Left colon (tissue), 2 donors: ENCODE measurements at regions of chr5 and their contacts with region 1.

Region 1: DNA sequence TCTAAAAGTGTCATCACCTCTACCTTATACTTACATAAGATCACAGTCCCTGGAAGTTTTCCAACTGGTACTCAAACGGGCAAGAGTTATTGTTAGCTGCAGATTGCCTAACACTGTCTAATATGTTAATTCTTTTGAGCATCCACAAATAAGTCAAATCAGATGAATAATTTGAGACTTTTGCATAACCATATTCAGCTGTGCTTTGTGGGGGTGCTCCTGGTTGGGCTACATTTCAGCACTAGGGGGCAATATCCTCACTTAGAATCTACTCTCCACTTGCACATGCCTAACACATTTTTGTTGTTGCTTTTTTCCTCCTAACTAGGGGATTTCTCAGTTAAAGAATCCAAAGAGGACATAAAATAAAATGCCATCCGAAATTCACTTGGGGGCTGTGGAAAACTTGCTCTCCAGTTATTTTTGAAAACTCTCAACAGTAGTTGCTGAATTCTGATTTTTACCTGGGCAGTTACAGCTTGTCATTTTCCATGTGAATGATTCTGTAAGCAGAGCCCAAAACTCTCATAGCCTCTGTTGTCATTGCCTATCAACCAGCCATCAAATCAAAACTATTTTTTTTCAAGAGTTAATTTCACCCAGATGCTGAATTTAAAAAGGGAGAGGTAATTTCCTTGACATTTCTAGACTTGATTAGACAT is 71.5 kb downstream of the TRIM36 start:
- DNase-seq: peak in 1 of 2 donors; percentile 16
- ATAC-seq: peak; percentile 88

Region 2: DNA sequence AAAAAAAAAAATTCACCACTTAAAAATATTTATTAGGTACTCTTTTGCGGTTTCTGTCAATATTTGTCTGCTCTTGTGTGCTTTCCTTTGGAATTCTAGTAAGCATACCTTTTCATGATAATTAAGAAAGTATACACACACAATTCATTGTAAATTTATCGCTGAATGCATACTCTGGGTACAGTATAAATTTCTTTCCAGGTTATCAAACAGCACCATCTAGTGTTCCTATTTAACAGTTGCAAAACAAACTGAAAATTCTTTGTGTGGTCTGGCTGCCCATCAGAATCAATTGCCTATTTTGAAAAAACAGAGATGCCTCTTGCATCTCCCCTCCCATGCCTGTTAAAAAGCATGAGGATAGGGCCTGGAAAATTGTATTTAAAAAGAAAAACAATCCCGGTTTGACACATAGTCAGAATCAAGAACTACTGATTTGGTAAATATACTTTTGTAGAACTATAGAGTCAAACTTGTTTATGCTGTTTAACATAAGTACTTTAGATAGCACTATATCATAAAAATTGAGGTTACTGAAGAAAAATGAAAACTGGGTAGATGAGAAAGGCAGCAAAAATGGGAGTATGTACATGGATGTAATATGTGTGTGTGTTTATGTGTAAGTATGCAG is 148.3 kb after region 1 on chr5:
- intact Hi-C with region 1: loop called in 1 of 2 experiments (anchors 5 kb)
- DNase-seq: no peak
- ATAC-seq: peak; percentile 75